Activated naive CD4-positive, alpha-beta T cell treated with anti-CD3 and anti-CD28 coated beads for 36 hours (primary cell): ENCODE measurements at regions of chr12 and their contacts with region 1.

Region 1: GRCh38 chr12:39272871-39273770 is 169.8 kb downstream of the KIF21A start:
- DNase-seq: peak; percentile 38
- H3K4me3 Mint-ChIP-seq: no peak overlapping the region
- H3K27ac Mint-ChIP-seq: no peak overlapping the region
- H3K4me1 Mint-ChIP-seq: peaks cover 6% of the 10 kb centered on the region
- H3K27me3 Mint-ChIP-seq: peaks cover 10% of the 10 kb centered on the region

Region 2: DNA sequence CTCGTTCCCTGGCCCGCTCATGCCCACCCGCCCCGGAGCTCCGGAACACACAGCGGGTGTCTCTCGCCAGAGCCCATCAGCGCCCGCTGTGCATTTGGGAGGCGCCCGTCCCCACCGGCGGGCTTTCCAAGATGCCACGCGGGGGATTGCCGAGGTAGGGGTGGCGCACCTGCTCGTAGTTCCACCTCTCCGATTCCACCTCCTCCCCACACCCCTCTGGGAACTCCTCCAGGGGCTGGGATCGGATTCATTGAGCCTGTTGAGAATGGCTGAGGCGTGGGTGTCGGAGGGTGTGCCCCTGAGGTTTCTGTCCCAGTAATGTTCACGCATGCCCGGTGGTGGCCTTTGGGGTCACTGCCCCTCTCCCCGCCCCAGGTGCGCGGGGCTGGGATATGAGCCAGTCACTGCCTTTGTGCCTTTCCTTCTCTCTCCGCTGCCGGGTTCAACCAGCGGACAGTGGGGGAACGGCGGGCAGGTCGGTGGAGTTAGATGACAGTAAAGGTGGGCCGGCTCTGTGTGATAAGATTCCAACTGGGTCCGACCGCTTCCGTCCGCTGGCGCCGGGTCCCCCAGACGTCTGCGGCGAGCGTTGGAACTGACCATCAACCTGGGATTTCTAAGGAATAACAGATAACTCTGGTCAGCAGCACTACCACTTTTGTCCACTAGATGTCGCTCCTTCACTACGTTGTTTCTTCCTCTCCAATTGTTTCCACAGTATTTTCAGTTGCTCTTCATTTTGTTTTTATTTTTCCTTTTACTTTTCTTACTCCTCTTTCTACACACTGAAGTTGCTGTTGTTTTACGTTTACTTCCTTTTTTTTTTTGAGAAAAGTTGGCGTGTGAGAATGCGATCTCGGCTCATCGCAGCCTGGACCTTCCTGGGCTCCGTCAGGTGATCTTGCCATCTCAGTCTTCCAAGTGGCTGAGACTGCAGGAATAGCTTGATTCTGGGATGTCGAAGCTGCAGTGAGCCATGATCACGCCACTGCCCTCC is 1134.6 kb before region 1 on chr12:
- CTCF ChIA-PET with region 1: interaction called, 5 read pairs
- intact Hi-C with region 1: loop called (anchors 5 kb)
- DNase-seq: peak; percentile 73
- H3K4me3 Mint-ChIP-seq: peak overlapping the region; percentile 61
- H3K27ac Mint-ChIP-seq: no peak overlapping the region
- H3K4me1 Mint-ChIP-seq: peaks cover 3% of the 10 kb centered on the region
- H3K27me3 Mint-ChIP-seq: peaks cover 6% of the 10 kb centered on the region

Region 3: DNA sequence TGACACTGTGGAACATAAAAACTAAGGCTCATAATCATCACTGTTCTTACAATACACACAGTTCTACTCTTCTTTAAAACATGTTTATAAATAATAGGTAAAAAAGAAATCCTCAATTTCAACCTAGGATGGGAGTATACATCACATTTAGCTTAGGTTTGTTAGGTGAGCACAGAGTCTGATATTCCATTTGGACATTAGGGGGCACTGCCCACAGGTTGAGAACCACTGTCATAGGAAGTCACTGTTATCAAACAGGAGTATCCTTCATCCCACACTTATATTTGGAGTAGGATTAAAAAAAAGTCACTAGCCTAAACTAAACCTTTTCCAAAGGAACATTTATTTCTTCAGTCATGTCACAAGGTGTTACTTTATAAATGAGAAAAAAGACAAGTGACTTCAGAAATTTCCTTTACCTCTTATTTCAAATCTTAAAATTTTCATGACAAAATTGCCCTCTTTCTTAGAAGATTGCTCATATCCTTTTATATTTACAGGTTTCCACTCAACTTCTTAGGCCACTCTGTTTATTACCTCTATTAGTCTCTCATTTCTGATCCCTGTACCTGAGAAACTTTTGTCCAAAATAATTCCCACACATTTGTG is 608.4 kb before region 1 on chr12:
- CTCF ChIA-PET with region 1: no interaction called
- intact Hi-C with region 1: loop called (anchors 2 kb)
- DNase-seq: no peak
- H3K4me3 Mint-ChIP-seq: no peak overlapping the region
- H3K27ac Mint-ChIP-seq: no peak overlapping the region
- H3K4me1 Mint-ChIP-seq: no peaks in the 10 kb centered on the region
- H3K27me3 Mint-ChIP-seq: no peaks in the 10 kb centered on the region

Region 4: DNA sequence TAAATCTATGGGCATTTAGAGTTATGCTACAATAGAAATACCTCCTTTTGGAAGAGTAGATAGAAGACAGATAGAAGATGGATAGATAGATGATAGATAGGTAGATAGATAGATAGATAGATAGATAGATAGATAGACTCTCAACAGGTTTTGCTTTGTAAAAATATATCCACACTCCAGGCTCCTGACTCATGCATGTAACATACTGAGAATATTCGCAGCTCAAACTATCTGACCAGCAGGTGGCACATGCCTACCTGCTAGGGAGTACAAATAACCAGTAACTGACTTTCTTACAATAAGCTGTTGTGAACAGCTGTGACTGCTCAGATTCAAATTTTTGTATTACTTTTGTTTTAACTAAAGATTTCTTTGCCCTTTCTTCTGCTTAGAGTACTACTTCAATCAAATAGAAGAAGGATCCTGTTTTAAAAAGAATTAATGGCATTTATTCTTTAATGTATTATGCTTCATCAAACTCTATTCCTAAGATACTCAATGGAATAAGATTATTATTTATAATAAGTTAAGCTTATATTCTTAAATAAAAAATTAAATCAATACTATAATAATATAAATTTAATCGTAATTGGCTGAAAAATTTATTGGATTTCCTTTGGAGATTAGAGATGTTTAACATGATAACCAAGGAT is 352.0 kb before region 1 on chr12:
- CTCF ChIA-PET with region 1: interaction called, 3 read pairs
- intact Hi-C with region 1: loop called (anchors 2 kb)
- DNase-seq: peak; percentile 60
- H3K4me3 Mint-ChIP-seq: no peak overlapping the region
- H3K27ac Mint-ChIP-seq: no peak overlapping the region
- H3K4me1 Mint-ChIP-seq: no peaks in the 10 kb centered on the region
- H3K27me3 Mint-ChIP-seq: no peaks in the 10 kb centered on the region

Region 5: DNA sequence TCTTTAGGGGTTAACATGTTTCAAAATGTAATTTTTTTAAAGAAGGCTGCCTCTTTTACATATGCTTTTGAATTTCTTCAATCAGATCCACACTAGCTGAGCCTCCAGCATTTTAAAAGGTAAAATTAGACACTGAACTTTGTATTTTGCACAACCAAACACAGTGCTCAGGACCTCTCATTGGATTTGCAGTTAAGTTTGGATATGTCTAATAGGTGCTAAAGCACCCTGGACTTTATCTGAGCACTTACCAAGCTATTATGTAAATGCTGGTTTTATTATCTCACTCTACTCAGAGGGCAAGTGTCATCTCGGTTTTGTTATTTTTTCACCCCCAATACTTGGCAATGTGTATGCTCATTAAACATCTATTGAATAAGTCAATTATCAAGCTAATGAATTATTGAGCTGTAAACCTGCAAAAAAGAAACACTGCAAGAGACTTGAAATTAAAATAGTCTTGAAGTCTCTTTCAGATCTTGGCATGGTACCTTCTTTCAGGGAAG is 19.1 kb after region 1 on chr12:
- CTCF ChIA-PET with region 1: interaction called, 12 read pairs
- intact Hi-C with region 1: no loop called
- DNase-seq: no peak
- H3K4me3 Mint-ChIP-seq: no peak overlapping the region
- H3K27ac Mint-ChIP-seq: no peak overlapping the region
- H3K4me1 Mint-ChIP-seq: no peaks in the 10 kb centered on the region
- H3K27me3 Mint-ChIP-seq: no peaks in the 10 kb centered on the region